ENCODE measurements at regions of chr3 and their contacts with region 1.

Region 1: DNA sequence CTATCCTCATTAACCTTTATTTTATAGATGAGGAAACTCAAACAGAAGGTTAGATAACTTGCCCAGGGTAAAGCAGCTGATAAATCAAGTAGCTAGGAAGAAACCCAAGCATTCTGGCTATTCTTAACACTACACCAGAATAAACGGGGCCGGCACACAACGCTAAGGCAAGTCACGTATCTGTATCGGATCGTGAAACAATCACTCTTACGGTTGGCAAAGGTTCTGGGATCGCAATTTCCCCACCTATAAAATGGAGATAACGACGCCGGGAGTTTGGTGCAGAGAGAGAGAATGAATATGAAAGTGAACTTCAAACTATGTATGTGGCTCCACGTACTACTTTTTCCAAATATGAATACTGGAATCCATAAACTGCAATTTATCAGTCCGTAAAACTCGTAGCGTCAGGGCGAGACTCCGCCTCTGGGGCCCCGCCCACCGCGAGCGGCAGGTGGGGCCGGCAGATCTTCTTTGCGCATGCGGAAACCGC is 252 bp upstream of the ARMC8 start:
- DNase-seq: peak; percentile 84
- H3K4me3 ChIP-seq: peak overlapping the region; percentile 74 to 93 (median 78)
- H3K27ac ChIP-seq: peak overlapping the region; percentile 80
- H3K4me1 ChIP-seq: peaks cover 12% of the 10 kb centered on the region
- H3K27me3 ChIP-seq: no peaks in the 10 kb centered on the region
- CTCF ChIP-seq: no peak

Region 2: DNA sequence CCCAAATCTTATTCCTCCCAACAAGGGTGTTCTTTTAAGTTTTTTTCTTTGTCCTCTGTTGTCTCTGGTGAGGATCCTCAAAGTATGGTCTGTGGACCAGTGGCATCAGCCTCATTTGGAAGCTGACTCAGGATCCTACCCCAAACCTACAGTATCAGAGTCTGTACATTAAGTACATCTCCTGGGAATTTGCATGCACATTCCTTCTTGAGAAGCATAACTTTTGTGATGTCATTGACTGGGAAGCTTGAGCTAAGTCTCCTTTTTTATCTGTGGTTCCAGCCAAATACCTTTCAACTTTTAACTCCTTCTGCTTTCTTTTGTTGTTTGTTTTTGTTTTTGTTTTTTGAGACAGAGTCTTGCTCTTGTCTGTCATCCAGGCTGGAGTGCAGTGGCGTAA is 40.8 kb after region 1 on chr3:
- CTCF ChIA-PET with region 1: no interaction called
- dilution Hi-C with region 1: no loop called
- in situ Hi-C with region 1: no loop called
- intact Hi-C with region 1: no loop called
- DNase-seq: no peak
- H3K4me3 ChIP-seq: no peak overlapping the region
- H3K27ac ChIP-seq: no peak overlapping the region
- H3K4me1 ChIP-seq: no peaks in the 10 kb centered on the region
- H3K27me3 ChIP-seq: no peaks in the 10 kb centered on the region
- CTCF ChIP-seq: no peak

Region 3: GRCh38 chr3:138254216-138254615 is 67.4 kb after region 1 on chr3:
- CTCF ChIA-PET with region 1: no interaction called
- dilution Hi-C with region 1: no loop called
- in situ Hi-C with region 1: no loop called
- intact Hi-C with region 1: loop called (anchors 5 kb)
- DNase-seq: peak; percentile 70
- H3K4me3 ChIP-seq: no peak overlapping the region
- H3K27ac ChIP-seq: peak overlapping the region; percentile 50
- H3K4me1 ChIP-seq: peaks cover 9% of the 10 kb centered on the region
- H3K27me3 ChIP-seq: no peaks in the 10 kb centered on the region
- CTCF ChIP-seq: no peak

Region 4: DNA sequence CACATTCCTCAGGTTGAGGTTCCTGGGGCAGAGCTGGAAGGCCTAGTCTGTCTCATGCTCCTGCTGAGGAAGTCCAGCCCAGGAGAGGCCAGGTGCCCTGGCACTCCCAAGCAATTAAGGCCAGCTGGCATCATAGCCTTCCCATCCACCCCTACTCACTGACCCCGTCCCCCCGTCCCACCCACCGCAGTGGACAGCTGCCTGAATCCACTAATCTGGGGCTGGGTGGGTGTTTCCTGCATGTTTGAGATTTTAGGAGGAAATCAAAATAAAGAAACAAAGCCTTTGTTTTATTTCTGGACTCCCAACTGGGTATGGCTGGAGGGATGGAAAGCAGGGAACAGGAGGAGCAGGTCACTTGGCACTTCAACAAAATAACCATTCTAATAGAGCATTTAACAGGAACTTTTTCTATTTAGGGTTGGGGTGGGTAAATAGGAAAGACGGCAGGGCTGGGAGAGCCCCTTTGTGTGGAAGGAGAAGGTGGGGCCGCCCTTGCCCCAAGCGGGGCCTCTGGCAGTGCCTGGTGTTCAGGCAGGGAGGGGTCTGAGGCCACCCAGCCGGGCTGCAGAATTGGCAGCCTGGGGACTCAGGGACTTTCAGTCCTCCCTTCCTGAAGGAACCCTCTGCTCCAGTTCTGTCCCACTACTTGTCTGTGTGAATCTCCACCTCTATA is 170.0 kb after region 1 on chr3:
- CTCF ChIA-PET with region 1: no interaction called
- dilution Hi-C with region 1: no loop called
- in situ Hi-C with region 1: no loop called
- intact Hi-C with region 1: no loop called
- DNase-seq: no peak
- H3K4me3 ChIP-seq: no peak overlapping the region
- H3K27ac ChIP-seq: no peak overlapping the region
- H3K4me1 ChIP-seq: no peaks in the 10 kb centered on the region
- H3K27me3 ChIP-seq: no peaks in the 10 kb centered on the region
- CTCF ChIP-seq: no peak